ENCODE measurements at regions of chr11 and their contacts with region 1.

Region 1: GRCh38 chr11:74748211-74749127 is at the start of gene RNF169:
- DNase-seq: peak; percentile 85
- H3K4me3 ChIP-seq: peak within 1 kb of the TSS; percentile 51
- H3K27me3 ChIP-seq: no peaks in the 10 kb centered on the region
- CTCF ChIP-seq: no peak
- polyA plus RNA-seq, gene RNF169: 4.5 and 7.9 TPM in 2 replicates

Region 2: GRCh38 chr11:74634537-74634936 is 113.9 kb before region 1 on chr11:
- CTCF ChIA-PET with region 1: no interaction called
- POLR2A ChIA-PET with region 1: interaction called, 14 read pairs
- DNase-seq: no peak
- H3K4me3 ChIP-seq: no peak overlapping the region
- H3K27me3 ChIP-seq: no peaks in the 10 kb centered on the region
- CTCF ChIP-seq: peak; percentile 49